ENCODE measurements at regions of chr22 and their contacts with region 1.

Region 1: DNA sequence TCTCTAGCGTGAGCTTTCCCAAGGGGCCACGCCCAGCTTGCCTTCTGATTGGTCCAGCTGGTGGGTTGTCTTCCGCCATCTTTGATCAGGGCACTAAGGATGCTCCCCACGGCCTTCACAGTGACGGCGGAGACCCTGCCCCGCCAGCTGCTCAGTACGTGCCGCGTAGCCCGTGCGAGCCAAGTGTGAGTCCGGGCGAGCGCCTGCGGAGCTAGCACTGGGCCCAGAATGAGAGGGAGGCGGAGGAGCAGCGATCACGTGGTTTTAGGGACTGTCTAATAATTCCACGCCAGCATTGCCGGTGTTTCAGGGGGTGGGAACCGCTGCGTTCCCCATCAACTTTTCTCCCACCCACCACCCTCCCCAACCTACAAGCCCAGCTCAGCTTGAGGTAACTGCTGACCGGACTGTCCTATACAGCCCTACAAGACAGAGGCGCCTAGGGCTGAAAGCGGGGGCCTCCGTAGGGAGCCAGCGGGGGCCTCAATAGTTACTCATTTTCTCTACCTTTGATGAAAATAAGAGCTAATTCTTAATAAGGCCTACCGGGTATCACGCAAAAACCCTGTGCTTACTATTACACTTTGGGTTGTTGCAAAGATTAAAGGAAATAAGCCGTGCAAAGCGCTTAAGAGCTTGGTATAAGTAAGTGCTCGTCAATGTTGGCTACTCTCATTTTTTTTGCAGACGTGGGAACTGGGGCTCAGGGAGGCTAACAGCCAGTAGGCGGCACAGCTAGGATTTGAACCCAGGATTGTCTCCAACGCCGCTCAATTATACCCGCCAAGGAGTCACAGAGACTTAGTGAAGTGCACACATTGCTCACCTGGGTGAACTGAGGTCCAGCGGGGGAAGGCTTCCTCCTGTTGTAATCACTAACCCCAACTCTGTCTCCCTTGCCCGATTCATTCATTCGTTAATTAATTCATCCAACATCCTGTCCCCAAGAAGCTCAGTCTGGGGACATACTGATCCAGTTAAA is 1.3 kb upstream of the MTFP1 start:
- H3K4me3 ChIP-seq: peak overlapping the region; percentile 39
- H3K27ac ChIP-seq: peak overlapping the region; percentile 98
- H3K4me1 ChIP-seq: peaks cover 28% of the 10 kb centered on the region
- CTCF ChIP-seq: no peak; the same call in 1 of the 2 replicates

Region 2: GRCh38 chr22:30116362-30117117 is 307.7 kb before region 1 on chr22:
- CTCF ChIA-PET with region 1: no interaction called
- POLR2A ChIA-PET with region 1: no interaction called
- H3K4me3 ChIP-seq: no peak overlapping the region
- H3K27ac ChIP-seq: no peak overlapping the region
- H3K4me1 ChIP-seq: no peaks in the 10 kb centered on the region; the same call in 1 of the 2 replicates
- CTCF ChIP-seq: no peak

Region 3: GRCh38 chr22:30305906-30306626 is 118.2 kb before region 1 on chr22:
- CTCF ChIA-PET with region 1: no interaction called
- POLR2A ChIA-PET with region 1: no interaction called
- H3K4me3 ChIP-seq: no peak overlapping the region
- H3K27ac ChIP-seq: no peak overlapping the region
- H3K4me1 ChIP-seq: no peaks in the 10 kb centered on the region
- CTCF ChIP-seq: no peak

Region 4: GRCh38 chr22:30326706-30327362 is 97.4 kb before region 1 on chr22 and contains the start of gene TBC1D10A:
- CTCF ChIA-PET with region 1: interaction called, 3 read pairs
- POLR2A ChIA-PET with region 1: interaction called, 10 read pairs
- H3K4me3 ChIP-seq: peak within 1 kb of the TSS; percentile 85
- H3K27ac ChIP-seq: peak within 1 kb of the TSS; percentile 72
- H3K4me1 ChIP-seq: peaks cover 11% of the 10 kb centered on the region
- CTCF ChIP-seq: no peak

Region 5: DNA sequence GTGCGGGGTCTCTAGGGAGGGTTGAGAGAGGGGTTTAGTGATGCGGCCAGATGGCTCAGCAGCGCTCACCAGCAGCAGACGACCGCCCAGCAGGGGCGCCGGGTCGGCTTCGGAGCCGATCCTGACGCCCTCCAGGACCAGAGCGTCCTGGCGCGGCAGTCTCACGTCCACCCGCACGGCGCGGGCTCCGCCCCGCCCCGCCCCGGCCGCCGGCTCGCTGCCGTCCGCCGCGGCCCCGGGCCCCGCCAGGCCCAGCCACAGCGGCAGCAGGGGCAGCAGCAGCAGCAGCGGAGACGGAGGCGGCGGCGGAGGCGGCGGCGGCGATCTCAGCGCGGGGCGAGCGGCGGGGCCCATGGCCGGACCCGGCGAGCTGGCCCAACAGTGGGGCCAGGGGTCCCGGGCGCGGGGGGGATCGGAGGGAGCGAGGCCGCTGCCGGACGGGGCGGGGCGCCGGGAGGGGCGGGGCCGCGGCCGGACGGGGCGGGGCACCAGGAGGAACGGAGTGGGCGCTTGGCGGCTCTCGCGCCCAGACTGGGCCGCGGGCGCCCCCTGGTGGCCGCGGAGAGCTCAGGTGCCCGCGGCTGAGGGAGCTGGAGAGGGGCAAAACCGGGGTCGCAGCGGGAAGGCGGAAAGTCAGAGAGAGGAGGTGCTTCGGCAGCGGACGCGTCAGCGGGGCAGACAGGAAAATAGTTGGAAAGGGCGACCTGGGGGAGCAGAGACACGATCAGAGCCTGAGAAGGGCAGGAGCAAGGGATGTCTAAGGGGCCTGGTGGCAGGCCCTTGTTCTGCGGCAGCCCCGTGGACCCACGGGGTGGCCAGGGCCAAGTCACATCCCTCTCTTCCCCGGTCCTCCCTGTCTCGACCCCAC is 37.1 kb before region 1 on chr22 and contains the start of gene RNF215:
- CTCF ChIA-PET with region 1: interaction called, 71 read pairs
- POLR2A ChIA-PET with region 1: interaction called, 21 read pairs
- H3K4me3 ChIP-seq: peak within 1 kb of the TSS; percentile 62
- H3K27ac ChIP-seq: peak within 1 kb of the TSS; percentile 76; the same call in 1 of the 2 replicates
- H3K4me1 ChIP-seq: peaks cover 2% of the 10 kb centered on the region; the same call in 1 of the 2 replicates
- CTCF ChIP-seq: peak; percentile 98

Region 6: GRCh38 chr22:30408414-30409104 is 15.7 kb before region 1 on chr22:
- CTCF ChIA-PET with region 1: interaction called, 14 read pairs
- POLR2A ChIA-PET with region 1: interaction called, 78 read pairs
- H3K4me3 ChIP-seq: no peak overlapping the region
- H3K27ac ChIP-seq: no peak overlapping the region
- H3K4me1 ChIP-seq: no peaks in the 10 kb centered on the region
- CTCF ChIP-seq: no peak

Region 7: GRCh38 chr22:30435674-30436126 is 11.4 kb after region 1 on chr22:
- CTCF ChIA-PET with region 1: interaction called, 11 read pairs
- POLR2A ChIA-PET with region 1: interaction called, 11 read pairs
- H3K4me3 ChIP-seq: no peak overlapping the region
- H3K27ac ChIP-seq: no peak overlapping the region
- H3K4me1 ChIP-seq: no peaks in the 10 kb centered on the region
- CTCF ChIP-seq: no peak

Region 8: DNA sequence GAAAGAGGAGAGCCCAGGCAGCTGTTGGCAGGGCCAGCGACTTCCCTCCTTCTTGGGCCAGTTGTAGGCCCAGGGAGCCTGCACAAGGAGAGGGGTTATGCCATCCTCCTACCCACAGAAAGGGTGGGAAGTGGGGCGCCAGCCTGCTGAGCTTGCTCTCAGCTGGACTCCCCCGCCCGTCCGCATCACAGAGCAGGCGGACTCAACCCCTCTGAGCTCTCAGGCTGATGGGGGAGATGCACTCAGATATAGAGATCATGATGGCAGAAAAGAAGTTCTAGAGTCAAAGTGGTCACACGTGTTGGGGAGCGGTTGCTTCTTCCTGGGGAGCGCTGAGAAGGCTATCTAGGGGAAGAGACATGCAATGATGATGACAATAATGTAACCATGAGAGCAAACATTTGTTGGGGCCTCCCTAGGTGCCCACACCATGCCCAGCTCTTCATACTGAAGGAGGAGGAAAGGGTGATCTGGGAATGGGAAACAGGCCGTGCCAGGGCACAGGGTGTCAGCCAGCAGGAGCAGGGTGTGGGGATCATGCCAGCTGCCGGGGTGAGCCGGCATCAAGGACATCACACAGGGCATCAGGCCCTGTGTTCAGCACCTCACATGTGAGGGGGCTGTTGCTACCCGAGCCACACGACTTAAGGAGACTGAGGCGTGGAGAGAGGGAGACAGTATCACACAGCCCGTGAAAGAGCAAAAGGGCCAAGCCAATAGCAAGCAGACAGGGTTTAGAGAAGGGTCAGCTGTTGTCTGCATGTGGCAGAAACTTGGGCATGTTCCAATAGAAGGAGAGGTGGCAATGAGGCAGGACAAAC is 219.0 kb after region 1 on chr22:
- CTCF ChIA-PET with region 1: no interaction called
- POLR2A ChIA-PET with region 1: no interaction called
- H3K4me3 ChIP-seq: no peak overlapping the region
- H3K27ac ChIP-seq: no peak overlapping the region
- H3K4me1 ChIP-seq: no peaks in the 10 kb centered on the region
- CTCF ChIP-seq: no peak

Measured in HEK293 (cell line).